ENCODE measurements at regions of chr12 and their contacts with region 1.

Region 1: GRCh38 chr12:67720351-67720856 is 71.9 kb downstream of the DYRK2 start:
- DNase-seq: peak in 4 of 5 donors; percentile 52 to 70 (median 61)
- ATAC-seq: peak; percentile 62 to 84 (median 80)
- H3K4me3 ChIP-seq: no peak overlapping the region
- H3K27ac ChIP-seq: peak overlapping the region in 11 of 12 donors; percentile 46 to 83 (median 65)
- H3K4me1 ChIP-seq: peaks cover 0 to 35% (median 19%) of the 10 kb centered on the region in 12 donors
- H3K27me3 ChIP-seq: no peaks in the 10 kb centered on the region
- CTCF ChIP-seq: no peak
- POLR2A ChIP-seq: no peak

Region 2: DNA sequence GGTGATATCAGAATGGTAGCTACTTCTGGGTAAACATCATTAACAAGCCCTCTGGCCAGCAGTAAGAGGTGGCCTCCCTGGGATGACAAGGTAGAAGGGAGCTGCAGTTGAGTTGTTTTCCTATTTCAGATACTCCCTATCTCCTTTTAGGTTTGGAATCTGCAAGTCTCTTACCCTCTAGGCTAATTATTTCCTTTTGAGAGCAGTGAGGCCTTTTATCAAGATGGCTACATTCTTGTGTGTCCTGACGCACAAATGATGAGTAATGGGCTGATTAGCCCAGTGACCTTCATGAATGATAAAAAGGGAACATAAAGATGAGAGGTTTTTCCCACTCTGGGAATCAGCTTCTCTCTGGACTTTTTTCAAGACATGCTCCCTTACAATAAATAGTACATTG is 49.0 kb before region 1 on chr12:
- intact Hi-C with region 1: loop called in 1 of 10 experiments (anchors 10 kb)
- DNase-seq: no peak
- ATAC-seq: peak in 1 of 4 donors; percentile 51
- H3K4me3 ChIP-seq: no peak overlapping the region
- H3K27ac ChIP-seq: peak overlapping the region in 6 of 12 donors; percentile 7 to 59 (median 36)
- H3K4me1 ChIP-seq: peaks cover 5 to 51% (median 29%) of the 10 kb centered on the region in 12 donors
- H3K27me3 ChIP-seq: no peaks in the 10 kb centered on the region
- CTCF ChIP-seq: no peak
- POLR2A ChIP-seq: no peak

Region 3: DNA sequence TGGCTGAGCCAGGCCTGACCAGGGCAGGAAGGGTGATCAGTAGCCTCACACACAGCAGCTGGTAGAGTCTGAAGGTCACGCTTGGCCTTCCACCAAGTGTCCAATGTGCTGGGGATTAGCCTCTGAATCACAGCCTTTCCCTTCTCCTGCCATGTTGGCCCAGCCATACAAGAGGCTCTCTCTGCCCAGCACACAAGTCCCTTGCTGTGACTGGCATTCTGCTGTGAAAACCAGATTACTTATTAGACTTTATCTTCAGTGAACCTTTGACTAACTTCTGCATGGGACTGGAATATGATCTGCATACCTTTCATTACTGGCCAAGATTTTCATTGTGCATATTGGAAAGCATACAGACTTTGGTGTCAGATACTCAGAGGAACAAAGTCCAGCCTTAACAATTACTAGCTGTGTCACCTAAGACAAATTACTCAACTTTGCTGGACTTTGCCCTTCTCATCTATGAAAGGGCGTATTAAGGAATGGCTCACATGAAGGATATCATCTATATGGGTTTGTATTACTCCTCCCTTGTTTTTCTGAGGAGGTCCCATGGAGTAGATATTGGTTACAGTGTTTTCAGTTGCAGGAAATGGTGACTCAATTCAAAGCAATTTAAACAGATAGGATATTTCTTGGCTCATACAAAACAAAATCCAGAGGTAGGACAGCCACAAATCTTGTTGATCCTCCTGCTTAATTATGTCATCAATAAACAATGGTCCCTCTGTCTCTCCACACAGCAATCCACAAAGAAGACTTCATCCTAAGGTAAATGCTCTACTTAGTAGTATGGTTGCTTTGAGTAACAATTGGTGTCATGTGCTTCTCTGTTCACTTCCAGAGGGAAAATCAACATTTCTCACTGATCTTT is 27.7 kb after region 1 on chr12:
- intact Hi-C with region 1: loop called in 1 of 10 experiments (anchors 2 kb)
- DNase-seq: peak in 1 of 5 donors; percentile 59
- ATAC-seq: peak; percentile 28 to 79 (median 60)
- H3K4me3 ChIP-seq: no peak overlapping the region
- H3K27ac ChIP-seq: peak overlapping the region in 4 of 12 donors; percentile 3 to 33 (median 14)
- H3K4me1 ChIP-seq: peaks cover 0 to 13% (median 3%) of the 10 kb centered on the region in 12 donors
- H3K27me3 ChIP-seq: no peaks in the 10 kb centered on the region
- CTCF ChIP-seq: no peak
- POLR2A ChIP-seq: no peak

Region 4: DNA sequence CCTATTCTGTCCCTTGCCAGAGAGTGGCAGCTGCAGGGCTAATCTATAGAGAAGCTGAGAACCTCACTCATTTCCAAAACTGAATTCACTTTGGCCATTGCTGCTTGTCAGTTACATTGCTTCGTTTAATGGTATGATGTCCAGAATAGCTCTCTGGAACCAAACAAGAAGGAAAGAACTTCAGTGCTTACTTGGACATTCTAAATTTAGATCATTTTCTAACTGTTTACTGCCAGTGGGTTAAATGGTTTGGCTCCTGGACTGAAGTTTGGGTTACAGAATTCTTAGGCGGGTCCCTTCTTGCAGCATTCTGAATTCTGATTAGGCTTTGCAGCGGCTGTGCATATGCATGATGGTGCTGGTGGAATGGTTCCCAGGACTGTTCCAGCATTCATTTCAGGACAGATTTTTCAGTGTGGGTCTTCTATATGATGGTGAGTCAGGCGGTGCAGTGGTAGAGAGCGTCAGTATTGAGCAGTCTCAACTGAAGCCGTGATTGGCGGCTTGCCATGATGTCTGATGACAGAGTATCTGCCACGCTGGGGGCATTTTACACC is 76.9 kb after region 1 on chr12:
- intact Hi-C with region 1: loop called in 1 of 10 experiments (anchors 5 kb)
- DNase-seq: peak in 4 of 5 donors; percentile 21 to 53 (median 30)
- ATAC-seq: peak; percentile 74 to 86 (median 80)
- H3K4me3 ChIP-seq: peak overlapping the region in 2 of 12 donors; percentile 10 to 22
- H3K27ac ChIP-seq: peak overlapping the region; percentile 7 to 82 (median 38)
- H3K4me1 ChIP-seq: peaks cover 0 to 36% (median 19%) of the 10 kb centered on the region in 12 donors
- H3K27me3 ChIP-seq: no peaks in the 10 kb centered on the region
- CTCF ChIP-seq: no peak
- POLR2A ChIP-seq: no peak

Measured in heart left ventricle (tissue), 16 donors.